Head of caudate nucleus (tissue), 42 donors: ENCODE measurements at regions of chr16 and their contacts with region 1.

Region 1: GRCh38 chr16:66483689-66484481 is 56.8 kb downstream of the BEAN1 start:
- DNase-seq: peak; percentile 59 to 91 (median 80)

Region 2: GRCh38 chr16:66406534-66407221 is 77.2 kb before region 1 on chr16:
- intact Hi-C with region 1: loop called (anchors 2 kb)
- DNase-seq: peak; percentile 78 to 97 (median 90)

Region 3: DNA sequence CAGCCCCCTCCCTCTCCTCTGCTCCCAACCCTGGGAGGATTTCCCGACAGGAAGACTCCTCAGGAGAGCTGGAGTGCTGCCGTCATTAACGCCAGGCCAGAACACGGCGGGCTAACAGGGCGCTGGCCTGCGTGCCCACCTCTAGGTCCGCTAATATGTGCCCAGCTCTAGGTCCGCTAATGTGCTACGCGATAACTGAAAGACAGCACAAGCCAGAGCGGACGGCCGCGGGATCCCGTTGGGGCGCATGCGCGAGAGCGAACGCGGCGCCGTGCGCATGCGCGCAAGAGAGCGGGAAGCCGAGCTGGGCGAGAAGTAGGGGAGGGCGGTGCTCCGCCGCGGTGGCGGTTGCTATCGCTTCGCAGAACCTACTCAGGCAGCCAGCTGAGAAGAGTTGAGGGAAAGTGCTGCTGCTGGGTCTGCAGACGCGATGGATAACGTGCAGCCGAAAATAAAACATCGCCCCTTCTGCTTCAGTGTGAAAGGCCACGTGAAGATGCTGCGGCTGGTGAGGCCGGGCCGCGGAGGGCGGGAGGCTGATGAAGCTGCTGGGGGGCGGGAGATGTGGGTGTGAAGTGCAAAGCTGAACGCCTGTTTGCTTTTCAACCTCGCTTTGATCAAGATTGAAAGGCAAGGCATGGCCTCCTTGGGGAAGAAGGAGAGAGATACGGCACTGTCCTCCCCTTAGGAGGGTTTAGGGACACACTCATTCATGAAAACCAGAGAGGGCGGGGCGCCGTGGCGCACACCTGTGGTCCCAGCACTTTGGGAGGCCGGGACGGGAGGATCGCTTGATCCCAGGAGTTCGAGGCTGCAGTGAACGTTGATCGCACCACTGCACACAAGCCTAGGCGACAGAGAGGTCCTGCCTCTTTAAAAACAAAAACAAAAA is 68.6 kb after region 1 on chr16 and contains the start of gene CKLF:
- intact Hi-C with region 1: no loop called
- DNase-seq: peak; percentile 73 to 96 (median 88)

Region 4: GRCh38 chr16:66695471-66695934 is 211.6 kb after region 1 on chr16:
- intact Hi-C with region 1: no loop called
- DNase-seq: peak in 34 of 42 donors; percentile 8 to 72 (median 43)